Activated CD8-positive, alpha-beta T cell treated with anti-CD3 and anti-CD28 coated beads for 36 hours (primary cell): ENCODE measurements at regions of chr6 and their contacts with region 1.

Region 1: DNA sequence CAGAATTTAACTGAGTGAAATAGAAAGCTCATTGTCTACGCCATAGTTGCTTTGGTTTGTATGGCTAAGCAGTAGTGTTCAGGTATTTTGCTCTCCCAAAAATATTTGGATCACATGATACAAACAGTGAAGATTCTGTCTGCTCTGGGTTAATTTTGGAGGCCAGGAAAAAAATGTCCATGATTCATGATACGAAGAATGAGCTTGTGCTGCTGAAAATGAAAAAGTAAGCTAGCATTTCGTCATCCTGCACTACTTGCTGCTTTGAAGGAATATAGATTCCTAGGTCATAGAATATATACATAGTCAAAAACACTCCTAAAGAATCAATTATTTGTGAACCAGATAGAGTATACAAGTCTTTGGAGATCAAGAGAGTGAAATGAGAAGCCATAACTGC is 8.3 kb downstream of the WRNIP1 start:
- DNase-seq: no peak
- ATAC-seq: no peak
- H3K4me3 Mint-ChIP-seq: no peak overlapping the region
- H3K27ac Mint-ChIP-seq: no peak overlapping the region
- H3K4me1 Mint-ChIP-seq: peaks cover 55% of the 10 kb centered on the region
- H3K27me3 Mint-ChIP-seq: no peaks in the 10 kb centered on the region
- CTCF ChIP-seq: no peak

Region 2: GRCh38 chr6:2658788-2659187 is 114.7 kb before region 1 on chr6:
- CTCF ChIA-PET with region 1: no interaction called
- POLR2A ChIA-PET with region 1: no interaction called
- intact Hi-C with region 1: no loop called
- DNase-seq: peak; percentile 10
- ATAC-seq: peak; percentile 17
- H3K4me3 Mint-ChIP-seq: no peak overlapping the region
- H3K27ac Mint-ChIP-seq: no peak overlapping the region
- H3K4me1 Mint-ChIP-seq: peaks cover 11% of the 10 kb centered on the region
- H3K27me3 Mint-ChIP-seq: no peaks in the 10 kb centered on the region
- CTCF ChIP-seq: no peak

Region 3: GRCh38 chr6:2738373-2738979 is 35.0 kb before region 1 on chr6:
- CTCF ChIA-PET with region 1: interaction called, 10 read pairs
- POLR2A ChIA-PET with region 1: no interaction called
- intact Hi-C with region 1: no loop called
- DNase-seq: peak; percentile 70
- ATAC-seq: peak; percentile 63
- H3K4me3 Mint-ChIP-seq: no peak overlapping the region
- H3K27ac Mint-ChIP-seq: no peak overlapping the region
- H3K4me1 Mint-ChIP-seq: peaks cover 5% of the 10 kb centered on the region
- H3K27me3 Mint-ChIP-seq: peaks cover 2% of the 10 kb centered on the region
- CTCF ChIP-seq: peak; percentile 73

Region 4: DNA sequence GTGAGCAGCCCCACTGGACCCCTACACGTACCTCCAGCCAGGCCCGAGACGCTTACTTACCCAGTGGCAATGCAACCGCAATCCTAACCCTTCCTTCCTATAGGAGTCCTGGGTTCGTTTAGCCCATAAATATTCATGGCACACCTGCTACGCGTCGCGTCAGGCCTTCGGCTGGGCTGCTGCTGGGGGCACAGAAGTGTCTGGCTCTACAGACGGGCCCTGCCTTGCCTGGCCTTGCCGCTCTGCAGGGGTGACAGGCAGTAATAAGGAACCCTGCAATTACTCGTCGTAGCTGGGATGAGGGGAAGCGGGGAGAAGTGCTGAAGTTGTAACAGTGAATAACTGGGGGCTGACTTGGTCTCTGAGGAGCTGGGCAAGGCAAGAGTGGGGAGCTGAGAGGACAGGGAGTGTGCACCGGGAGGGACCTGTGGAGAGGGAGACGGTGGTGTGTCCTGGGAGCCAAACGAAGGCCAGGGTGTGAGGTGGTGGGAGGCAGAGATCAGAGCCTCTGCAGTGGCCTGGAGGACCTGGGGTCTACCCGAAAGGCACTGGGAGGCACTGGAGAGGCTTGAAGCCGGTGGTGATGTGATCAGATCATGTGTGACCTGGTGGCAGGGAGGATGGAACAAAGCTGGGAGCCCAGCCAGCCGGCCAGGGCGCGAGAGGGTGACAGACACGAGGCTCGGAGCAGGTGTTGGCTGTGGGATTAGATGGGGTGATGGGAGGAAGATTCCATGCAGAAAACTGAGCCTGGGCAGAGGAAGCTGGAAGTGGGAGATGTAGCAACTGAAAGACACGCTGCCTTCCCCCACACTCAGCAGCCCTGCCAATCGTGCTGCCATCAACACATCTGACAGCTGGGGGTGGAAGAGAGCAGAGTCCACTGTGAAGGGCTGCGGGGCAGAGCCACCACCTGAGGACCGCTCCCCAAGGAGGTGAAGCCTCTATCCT is 521.7 kb after region 1 on chr6:
- CTCF ChIA-PET with region 1: no interaction called
- POLR2A ChIA-PET with region 1: no interaction called
- intact Hi-C with region 1: no loop called
- DNase-seq: no peak
- ATAC-seq: no peak
- H3K4me3 Mint-ChIP-seq: no peak overlapping the region
- H3K27ac Mint-ChIP-seq: no peak overlapping the region
- H3K4me1 Mint-ChIP-seq: no peaks in the 10 kb centered on the region
- H3K27me3 Mint-ChIP-seq: no peaks in the 10 kb centered on the region
- CTCF ChIP-seq: no peak